ENCODE measurements at regions of chr17 and their contacts with region 1.

Region 1: DNA sequence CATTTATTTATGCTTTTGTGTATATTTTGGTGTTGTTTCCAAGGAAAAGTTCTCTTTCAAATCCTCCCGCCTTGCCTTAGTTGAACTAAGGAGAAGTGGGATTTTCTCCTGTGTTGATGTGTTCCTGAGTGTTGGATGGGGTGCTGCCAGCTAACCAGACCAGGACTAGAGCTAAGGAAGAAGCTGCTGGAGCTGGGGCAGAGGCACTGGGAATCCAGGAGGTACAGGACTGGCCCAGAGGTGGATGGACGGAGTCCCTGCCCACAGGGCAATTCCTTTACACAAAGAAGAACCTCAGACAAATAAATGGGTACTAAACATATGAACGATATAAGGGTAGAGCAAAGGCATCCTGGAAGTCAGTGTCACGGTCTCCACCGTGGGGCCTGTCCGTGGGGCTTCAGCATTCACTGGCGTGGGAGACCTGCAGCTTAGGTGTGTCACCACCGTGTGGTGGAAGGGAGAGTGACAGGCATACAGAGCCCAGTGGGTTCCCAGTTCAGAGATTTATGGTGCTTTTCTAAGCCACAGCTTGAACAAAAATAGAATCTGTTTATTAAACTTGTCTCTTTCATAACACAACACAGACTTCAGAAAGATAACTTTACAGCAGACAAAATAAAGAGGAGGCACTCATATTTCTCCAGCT is 270.7 kb downstream of the NTN1 start:
- H3K4me3 ChIP-seq: no peak overlapping the region
- H3K27ac ChIP-seq: no peak overlapping the region
- H3K4me1 ChIP-seq: no peaks in the 10 kb centered on the region
- CTCF ChIP-seq: peak; percentile 47

Region 2: GRCh38 chr17:9279893-9280292 is 12.1 kb before region 1 on chr17:
- CTCF ChIA-PET with region 1: interaction called, 12 read pairs
- POLR2A ChIA-PET with region 1: no interaction called
- H3K4me3 ChIP-seq: no peak overlapping the region
- H3K27ac ChIP-seq: no peak overlapping the region
- H3K4me1 ChIP-seq: 0 out of 2 replicates have a peak, but pooled peaks cover 2% of the 10 kb centered on the region
- CTCF ChIP-seq: no peak

Region 3: DNA sequence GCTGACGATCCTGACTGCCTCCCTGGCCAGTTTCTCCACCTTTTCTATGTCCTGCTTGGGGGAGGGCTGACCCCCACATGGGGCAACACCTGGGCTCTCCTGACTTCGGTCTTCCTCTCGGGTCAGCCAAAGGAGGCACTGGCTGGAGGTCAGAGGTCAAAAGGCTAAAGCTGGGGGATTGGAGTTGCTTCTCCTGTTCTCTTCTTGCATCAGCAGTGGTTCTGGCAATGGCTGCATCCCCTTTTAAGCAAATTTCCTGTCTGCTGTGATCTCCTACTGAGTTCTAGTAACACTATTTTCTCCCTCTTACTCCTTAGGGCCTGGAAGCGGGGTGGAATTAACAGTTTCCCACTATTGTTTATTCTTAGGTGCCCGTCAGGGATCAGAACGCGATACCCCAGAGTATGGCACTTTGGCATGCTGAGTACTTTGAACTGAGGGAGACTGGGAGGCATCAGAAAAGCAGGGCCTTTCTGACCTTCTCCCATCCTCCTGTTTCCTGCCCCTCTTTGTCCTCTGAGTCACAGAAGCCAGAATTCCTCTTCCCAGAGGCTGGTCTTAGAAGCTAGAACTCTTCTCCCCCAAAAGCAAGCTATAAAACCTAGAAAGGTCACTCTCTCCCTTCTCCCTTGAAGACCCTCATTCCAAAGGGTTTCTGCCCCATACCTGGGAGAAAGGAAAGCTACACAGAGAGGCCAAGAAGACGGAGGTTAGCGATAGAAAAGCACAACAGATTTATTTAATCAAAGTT is 15.4 kb after region 1 on chr17:
- CTCF ChIA-PET with region 1: interaction called, 10 read pairs
- POLR2A ChIA-PET with region 1: no interaction called
- H3K4me3 ChIP-seq: no peak overlapping the region
- H3K27ac ChIP-seq: no peak overlapping the region
- H3K4me1 ChIP-seq: no peaks in the 10 kb centered on the region
- CTCF ChIP-seq: no peak